Brain microvascular endothelial cell (primary cell): ENCODE measurements at regions of chr9 and their contacts with region 1.

Region 1: DNA sequence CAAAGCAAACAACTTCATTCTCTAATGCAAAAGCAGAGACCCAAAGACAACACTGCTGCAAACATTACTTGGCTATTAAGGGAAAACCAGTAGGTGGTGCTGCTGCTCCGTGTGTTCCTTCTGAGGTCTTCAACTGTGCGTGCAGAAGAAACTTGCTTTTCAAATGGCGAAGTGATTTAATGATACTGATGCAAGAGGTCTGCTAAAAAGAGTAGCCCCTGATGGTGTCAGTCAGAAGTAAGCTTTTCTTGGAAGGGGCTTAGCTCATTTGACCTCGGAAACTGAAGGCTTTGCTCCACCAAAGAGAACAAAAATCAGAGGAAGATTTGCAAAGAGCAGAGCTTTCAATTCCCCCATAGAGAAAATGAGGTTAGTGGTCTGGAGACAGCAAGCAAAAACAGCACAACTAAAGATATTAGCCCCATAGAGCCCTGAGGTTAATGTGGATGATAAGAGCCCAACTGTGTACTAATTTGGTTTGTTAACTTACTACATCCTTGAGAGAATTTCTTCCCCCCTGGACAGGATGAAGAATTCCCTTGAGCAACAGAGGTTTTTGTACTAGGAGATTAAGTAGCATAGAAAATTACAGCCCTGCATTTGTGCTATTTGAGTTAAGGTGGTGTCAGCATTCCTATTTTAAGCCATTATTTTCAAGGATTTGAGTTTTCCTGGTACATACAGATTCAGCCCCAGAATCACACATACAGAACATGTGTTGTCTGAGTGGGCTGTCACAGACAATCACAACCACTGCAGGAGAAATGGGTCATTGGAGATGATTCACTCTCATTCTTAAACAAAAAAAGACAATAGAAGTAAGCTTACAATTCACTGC is 153.2 kb upstream of the C9orf72 start:
- DNase-seq: peak; percentile 75
- H3K4me3 ChIP-seq: no peak overlapping the region
- H3K27ac ChIP-seq: no peak overlapping the region
- H3K27me3 ChIP-seq: no peaks in the 10 kb centered on the region
- CTCF ChIP-seq: peak; percentile 87

Region 2: GRCh38 chr9:27933210-27934025 is 207.0 kb after region 1 on chr9:
- in situ Hi-C with region 1: no loop called
- DNase-seq: no peak
- H3K4me3 ChIP-seq: no peak overlapping the region
- H3K27ac ChIP-seq: no peak overlapping the region
- H3K27me3 ChIP-seq: no peaks in the 10 kb centered on the region
- CTCF ChIP-seq: no peak

Region 3: DNA sequence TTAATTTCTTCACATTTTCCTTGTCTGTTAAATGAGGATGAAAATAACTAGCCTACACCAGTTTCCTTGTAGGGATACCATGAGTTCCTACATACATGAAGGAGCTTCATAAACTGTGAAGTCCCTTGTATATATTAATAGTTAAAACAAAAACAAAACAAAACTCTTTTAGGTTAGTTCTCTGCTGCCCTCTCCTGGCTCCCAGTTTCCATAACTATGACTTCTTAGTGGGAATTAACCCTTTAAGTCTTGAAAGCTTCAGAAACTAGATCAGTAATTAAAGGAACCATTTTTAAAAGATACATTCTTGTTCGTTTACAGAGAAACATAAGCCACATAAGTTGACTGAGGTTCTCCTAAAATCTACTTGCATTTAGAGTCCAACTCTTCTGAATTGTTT is 346.8 kb after region 1 on chr9:
- in situ Hi-C with region 1: loop called (anchors 25 kb)
- DNase-seq: peak; percentile 63
- H3K4me3 ChIP-seq: no peak overlapping the region
- H3K27ac ChIP-seq: no peak overlapping the region
- H3K27me3 ChIP-seq: no peaks in the 10 kb centered on the region
- CTCF ChIP-seq: peak; percentile 63